GM12878 (cell line): ENCODE measurements at regions of chr11 and their contacts with region 1.

Region 1: DNA sequence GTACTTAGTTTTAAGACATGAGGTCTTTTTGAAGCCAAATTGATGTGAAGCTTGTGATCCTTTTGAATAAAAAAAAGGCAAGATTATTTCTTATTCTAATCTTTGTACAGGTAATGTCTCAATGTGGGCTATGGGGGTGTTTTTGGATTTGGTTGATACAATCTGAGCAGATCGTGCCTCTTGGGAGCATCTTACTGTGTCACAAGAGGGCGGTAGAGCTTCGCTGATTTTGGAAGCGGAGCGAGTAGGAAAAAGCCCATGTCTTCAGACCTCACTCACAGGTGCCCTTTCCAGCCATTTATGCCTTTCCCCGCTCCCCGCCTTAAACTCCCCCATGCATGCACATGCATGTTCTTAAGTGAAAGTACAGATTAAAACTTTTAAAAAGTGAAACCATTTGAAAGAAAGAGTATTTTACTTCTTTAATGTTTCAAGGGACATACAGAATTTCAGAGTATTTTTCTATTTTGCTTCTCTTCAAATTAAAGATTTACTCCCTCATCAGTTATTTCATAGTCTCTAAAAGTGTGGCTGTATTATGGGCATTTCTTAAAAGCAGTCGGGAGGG is 18.8 kb downstream of the DDX25 start:
- DNase-seq: peak; percentile 37
- ATAC-seq: peak; percentile 97
- H3K4me3 ChIP-seq: no peak overlapping the region
- H3K27ac ChIP-seq: no peak overlapping the region
- H3K4me1 ChIP-seq: no peaks in the 10 kb centered on the region
- H3K27me3 ChIP-seq: no peaks in the 10 kb centered on the region
- CTCF ChIP-seq: peak; percentile 83 to 89 (median 85)
- EP300 ChIP-seq: no peak
- POLR2A ChIP-seq: no peak
- RAD21 ChIP-seq: peak; percentile 89

Region 2: DNA sequence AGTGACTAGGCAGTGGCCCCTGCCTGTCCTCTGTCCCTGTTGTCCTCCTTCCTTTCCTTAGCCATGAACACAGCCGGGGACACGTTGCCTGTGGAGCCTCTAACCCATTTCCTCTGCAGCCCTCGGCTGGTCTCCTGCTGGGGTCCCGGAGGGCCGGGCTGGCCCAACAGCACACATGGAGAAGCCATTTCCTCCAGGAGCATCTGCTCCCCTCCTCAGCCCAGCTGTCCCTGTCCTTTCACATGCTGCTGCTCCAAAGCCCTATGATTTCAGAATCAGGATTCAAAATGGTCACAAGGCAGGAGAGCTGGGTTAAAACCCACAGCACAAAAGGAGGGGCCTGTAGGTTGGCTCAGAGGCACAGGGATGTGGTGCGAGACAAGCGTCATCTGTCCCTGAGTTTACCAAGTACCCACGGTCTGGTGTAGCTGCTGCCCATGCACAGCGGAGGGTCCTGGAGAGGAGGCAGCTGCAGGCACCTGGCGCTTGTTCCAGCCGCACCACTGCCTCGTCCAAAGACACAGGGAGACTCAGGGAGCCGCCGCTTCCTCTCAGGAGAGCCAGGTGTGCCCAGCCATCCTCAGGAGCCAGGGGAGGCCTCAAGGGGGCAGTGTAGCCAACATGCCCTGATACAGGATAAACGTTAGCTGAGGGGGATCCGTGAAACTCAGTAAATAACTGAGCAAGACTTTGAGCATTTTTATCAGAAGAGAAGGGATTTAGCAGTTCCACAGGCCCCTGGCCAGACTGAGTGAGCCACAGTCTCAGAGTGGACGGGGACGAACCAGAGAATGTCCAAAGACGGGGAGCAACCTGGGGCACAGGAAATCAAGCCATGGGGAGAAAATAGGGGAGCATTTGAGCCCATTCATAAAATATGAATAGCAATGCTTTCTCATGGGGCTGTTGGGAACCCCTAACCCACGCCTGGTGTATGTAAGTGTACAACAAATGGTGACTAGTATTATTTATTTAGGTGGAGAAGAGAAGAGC is 18.8 kb after region 1 on chr11:
- CTCF ChIA-PET with region 1: interaction called, 10 read pairs
- POLR2A ChIA-PET with region 1: interaction called, 4 read pairs
- RAD21 ChIA-PET with region 1: no interaction called
- SMC1A ChIA-PET with region 1: interaction called, 4 read pairs
- in situ Hi-C with region 1: no loop called
- intact Hi-C with region 1: no loop called
- DNase-seq: no peak
- ATAC-seq: peak; percentile 96
- H3K4me3 ChIP-seq: no peak overlapping the region
- H3K27ac ChIP-seq: no peak overlapping the region
- H3K4me1 ChIP-seq: no peaks in the 10 kb centered on the region
- H3K27me3 ChIP-seq: no peaks in the 10 kb centered on the region; a peak in 1 of 4 replicates
- CTCF ChIP-seq: peak; percentile 73 to 87 (median 83)
- EP300 ChIP-seq: no peak
- POLR2A ChIP-seq: no peak
- RAD21 ChIP-seq: peak; percentile 67

Region 3: GRCh38 chr11:125971618-125972017 is 48.5 kb after region 1 on chr11:
- CTCF ChIA-PET with region 1: no interaction called
- POLR2A ChIA-PET with region 1: no interaction called
- RAD21 ChIA-PET with region 1: no interaction called
- SMC1A ChIA-PET with region 1: no interaction called
- in situ Hi-C with region 1: no loop called
- intact Hi-C with region 1: no loop called
- DNase-seq: no peak
- ATAC-seq: no peak
- H3K4me3 ChIP-seq: no peak overlapping the region
- H3K27ac ChIP-seq: no peak overlapping the region
- H3K4me1 ChIP-seq: no peaks in the 10 kb centered on the region
- H3K27me3 ChIP-seq: no peaks in the 10 kb centered on the region
- CTCF ChIP-seq: no peak
- EP300 ChIP-seq: no peak
- POLR2A ChIP-seq: no peak
- RAD21 ChIP-seq: no peak

Region 4: DNA sequence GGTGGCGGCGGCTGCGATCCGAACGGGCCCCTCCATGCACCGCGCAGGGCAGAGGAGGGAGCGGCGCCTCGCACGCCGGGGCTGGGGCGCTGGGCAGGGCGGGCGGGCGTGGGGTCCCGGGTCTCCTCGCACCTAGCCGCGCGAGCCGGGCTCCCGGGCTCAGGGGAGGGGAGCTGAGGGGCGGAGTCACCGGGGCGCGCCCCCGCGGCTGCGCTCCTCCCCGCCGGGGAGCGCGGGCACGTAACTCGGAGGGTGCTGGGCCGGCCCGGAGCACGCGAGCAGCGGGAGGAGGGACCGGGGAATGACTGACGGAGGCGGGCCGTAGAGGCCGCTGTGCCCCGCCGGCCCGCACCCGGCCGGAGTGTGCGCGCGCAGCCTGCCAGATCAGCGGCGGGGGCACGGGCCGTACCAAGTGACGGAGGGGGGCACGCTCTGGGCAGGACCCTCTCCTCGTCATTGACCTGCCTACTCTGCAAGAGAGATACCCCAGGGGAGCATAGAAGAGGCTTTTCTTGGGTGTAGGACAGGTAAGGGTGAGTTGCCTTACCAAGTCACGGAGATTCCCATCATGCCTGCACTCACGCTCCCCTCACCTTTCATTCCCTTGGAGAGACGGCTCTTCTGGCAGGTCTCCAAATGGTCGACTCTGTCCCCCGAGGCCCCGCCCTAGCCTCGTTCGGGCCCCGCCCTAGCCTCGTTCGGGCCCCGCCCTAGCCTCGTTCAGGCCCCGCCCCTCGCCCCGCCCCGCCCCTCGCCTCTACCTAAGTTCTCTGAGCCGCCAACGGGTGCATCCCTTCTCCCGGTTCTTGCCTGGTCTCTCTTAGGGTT is 139.8 kb after region 1 on chr11 and contains the start of gene CDON:
- CTCF ChIA-PET with region 1: interaction called, 5 read pairs
- POLR2A ChIA-PET with region 1: no interaction called
- RAD21 ChIA-PET with region 1: interaction called, 3 read pairs
- SMC1A ChIA-PET with region 1: interaction called, 3 read pairs
- in situ Hi-C with region 1: no loop called
- intact Hi-C with region 1: loop called (anchors 5 kb)
- DNase-seq: peak; percentile 48
- ATAC-seq: peak; percentile 97
- H3K4me3 ChIP-seq: peak within 1 kb of the TSS; percentile 72
- H3K27ac ChIP-seq: peak within 1 kb of the TSS; percentile 91
- H3K4me1 ChIP-seq: no peaks in the 10 kb centered on the region
- H3K27me3 ChIP-seq: peaks cover 1 to 14% of the 10 kb centered on the region in 2 experiments
- CTCF ChIP-seq: peak in 1 of 3 experiments; percentile 17; a peak in 1 of 6 replicates
- EP300 ChIP-seq: no peak
- POLR2A ChIP-seq: peak; percentile 59; the same call in 1 of the 2 replicates
- RAD21 ChIP-seq: no peak
- polyA plus RNA-seq, gene CDON: 0.07 to 0.21 TPM

Region 5: DNA sequence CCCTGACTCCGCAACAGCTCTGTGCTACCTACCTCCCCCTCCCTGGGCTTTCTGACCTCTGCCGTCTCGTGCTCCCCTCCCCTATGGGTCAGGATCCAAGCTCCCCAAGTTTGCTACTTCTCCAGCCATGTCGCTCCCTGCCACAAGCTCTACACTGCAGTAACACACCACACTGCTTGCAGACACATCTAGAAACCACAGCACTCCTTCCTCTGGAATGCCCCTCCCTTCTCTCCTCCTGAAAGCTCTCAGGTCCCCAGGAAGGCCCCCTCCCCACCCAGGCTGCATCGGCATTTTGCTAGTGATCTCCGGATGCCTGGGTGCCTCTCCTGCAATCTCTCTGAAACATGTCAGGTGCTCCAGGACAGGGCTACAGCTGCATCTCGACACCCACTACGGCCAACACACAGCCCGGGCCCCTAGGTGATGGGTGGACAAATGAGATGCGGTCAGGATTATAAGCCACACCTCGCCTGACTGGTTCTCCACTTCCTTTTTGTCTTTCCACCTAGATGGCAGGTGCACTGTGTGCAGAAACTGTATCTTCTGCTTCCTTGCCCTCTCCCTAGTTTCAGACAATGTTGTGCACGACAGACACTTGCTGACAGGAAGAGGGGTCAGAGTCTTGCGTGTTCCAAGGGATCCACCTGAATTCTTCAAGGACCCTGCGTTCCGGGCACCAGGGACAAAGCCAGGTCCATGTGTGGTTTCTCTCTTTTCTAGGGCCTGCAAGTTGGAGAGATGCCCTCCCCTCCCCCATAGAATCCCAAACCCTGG is 265.4 kb after region 1 on chr11:
- CTCF ChIA-PET with region 1: interaction called, 120 read pairs
- POLR2A ChIA-PET with region 1: no interaction called
- RAD21 ChIA-PET with region 1: interaction called, 27 read pairs
- SMC1A ChIA-PET with region 1: interaction called, 61 read pairs
- in situ Hi-C with region 1: loop called (anchors 5 kb)
- intact Hi-C with region 1: loop called (anchors 1 kb)
- DNase-seq: peak; percentile 64
- ATAC-seq: peak; percentile 92
- H3K4me3 ChIP-seq: peak overlapping the region; percentile 45; the same call in 1 of the 2 replicates
- H3K27ac ChIP-seq: peak overlapping the region; percentile 66
- H3K4me1 ChIP-seq: peaks cover 30% of the 10 kb centered on the region
- H3K27me3 ChIP-seq: no peaks in the 10 kb centered on the region
- CTCF ChIP-seq: no peak
- EP300 ChIP-seq: peak in 1 of 2 experiments; percentile 79; a peak in 3 of 4 replicates
- POLR2A ChIP-seq: no peak
- RAD21 ChIP-seq: no peak

Region 6: DNA sequence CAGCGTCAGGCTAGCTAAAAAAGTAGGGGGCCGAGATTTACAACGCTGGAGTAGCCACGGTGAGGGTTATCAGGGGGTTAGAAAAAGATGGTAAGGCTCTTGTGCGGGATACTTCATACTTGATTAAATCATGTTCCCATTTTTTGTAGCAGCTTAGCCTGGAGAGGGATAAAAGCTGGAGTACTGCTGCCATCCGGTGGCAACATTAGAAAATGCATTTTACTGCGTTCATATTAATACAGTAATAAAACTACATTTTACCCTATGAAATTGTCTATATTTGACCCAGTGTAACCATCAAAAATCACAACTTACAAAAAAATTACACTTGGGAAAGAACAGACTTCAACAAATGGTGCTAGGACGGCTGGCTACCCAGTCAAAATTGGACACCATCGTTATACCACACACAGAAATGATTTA is 271.0 kb after region 1 on chr11:
- CTCF ChIA-PET with region 1: interaction called, 120 read pairs
- POLR2A ChIA-PET with region 1: no interaction called
- RAD21 ChIA-PET with region 1: interaction called, 27 read pairs
- SMC1A ChIA-PET with region 1: interaction called, 61 read pairs
- in situ Hi-C with region 1: loop called (anchors 5 kb)
- intact Hi-C with region 1: loop called (anchors 1 kb)
- DNase-seq: no peak
- ATAC-seq: peak; percentile 56
- H3K4me3 ChIP-seq: no peak overlapping the region
- H3K27ac ChIP-seq: no peak overlapping the region
- H3K4me1 ChIP-seq: peaks cover 14% of the 10 kb centered on the region
- H3K27me3 ChIP-seq: no peaks in the 10 kb centered on the region
- CTCF ChIP-seq: peak; percentile 43 to 70 (median 54); a peak in 5 of 6 replicates
- EP300 ChIP-seq: no peak
- POLR2A ChIP-seq: no peak
- RAD21 ChIP-seq: peak; percentile 83

Region 7: DNA sequence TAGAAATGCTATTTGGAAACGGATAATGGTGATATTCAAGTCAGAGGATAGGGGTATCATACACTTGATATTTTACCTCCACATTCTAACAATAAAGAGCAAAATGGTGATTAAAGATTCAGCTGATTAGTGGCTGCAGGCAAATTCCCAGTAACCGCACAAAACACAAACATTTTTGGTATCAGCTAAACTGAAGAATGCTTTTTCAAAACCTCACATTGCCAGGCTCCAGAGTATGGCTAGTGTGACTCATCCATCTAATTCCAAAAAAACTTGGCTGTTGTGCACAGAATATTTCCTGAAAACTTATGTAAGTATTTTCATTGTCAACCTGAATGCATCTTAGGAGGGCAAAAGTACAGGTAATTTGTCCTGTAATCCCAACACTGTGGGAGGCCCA is 334.7 kb after region 1 on chr11:
- CTCF ChIA-PET with region 1: no interaction called
- POLR2A ChIA-PET with region 1: no interaction called
- RAD21 ChIA-PET with region 1: no interaction called
- SMC1A ChIA-PET with region 1: interaction called, 3 read pairs
- in situ Hi-C with region 1: no loop called
- intact Hi-C with region 1: loop called (anchors 5 kb)
- DNase-seq: no peak
- ATAC-seq: no peak
- H3K4me3 ChIP-seq: no peak overlapping the region
- H3K27ac ChIP-seq: no peak overlapping the region
- H3K4me1 ChIP-seq: no peaks in the 10 kb centered on the region
- H3K27me3 ChIP-seq: no peaks in the 10 kb centered on the region
- CTCF ChIP-seq: no peak
- EP300 ChIP-seq: no peak
- POLR2A ChIP-seq: no peak
- RAD21 ChIP-seq: no peak

Region 8: GRCh38 chr11:126669416-126669815 is 746.3 kb after region 1 on chr11:
- CTCF ChIA-PET with region 1: no interaction called
- POLR2A ChIA-PET with region 1: no interaction called
- RAD21 ChIA-PET with region 1: no interaction called
- SMC1A ChIA-PET with region 1: no interaction called
- in situ Hi-C with region 1: no loop called
- intact Hi-C with region 1: no loop called
- DNase-seq: no peak
- ATAC-seq: no peak
- H3K4me3 ChIP-seq: no peak overlapping the region
- H3K27ac ChIP-seq: no peak overlapping the region
- H3K4me1 ChIP-seq: no peaks in the 10 kb centered on the region
- H3K27me3 ChIP-seq: peaks cover 0 to 1% of the 10 kb centered on the region in 2 experiments; a peak in 1 of 4 replicates
- CTCF ChIP-seq: no peak
- EP300 ChIP-seq: no peak
- POLR2A ChIP-seq: no peak
- RAD21 ChIP-seq: no peak